Adrenal gland (tissue), 19 donors: ENCODE measurements at regions of chr12 and their contacts with region 1.

Region 1: DNA sequence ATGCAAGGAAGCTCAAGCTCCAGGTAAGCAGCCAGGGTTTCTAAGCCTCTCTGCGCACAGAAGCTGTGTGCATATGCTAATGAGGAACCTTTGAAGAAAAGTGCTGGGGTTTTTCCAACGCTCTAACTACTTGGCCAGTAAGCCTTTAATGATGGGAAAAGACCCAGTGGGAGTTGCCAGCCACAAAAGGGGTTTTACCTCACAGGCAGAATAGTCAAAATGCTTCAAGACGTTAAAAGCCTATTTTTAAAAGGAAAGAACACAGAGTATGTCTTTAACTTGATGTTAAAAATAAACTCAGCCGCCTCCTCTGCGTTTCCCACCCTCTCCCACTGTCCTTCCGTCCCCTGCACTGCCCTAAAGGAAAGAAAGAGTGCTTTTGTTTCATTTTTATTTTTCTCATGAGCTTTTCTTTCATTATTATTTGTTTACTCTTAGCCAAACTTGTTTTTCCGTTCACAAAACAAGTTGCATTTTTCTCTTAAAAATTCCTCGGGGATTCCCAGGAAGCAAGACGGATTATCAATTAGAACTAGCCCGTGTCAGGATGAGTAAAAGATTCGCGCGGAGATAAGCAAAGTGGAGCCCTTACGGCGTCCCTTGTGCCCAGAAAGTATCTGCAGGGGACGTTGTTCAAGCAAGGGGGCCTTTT is 209.8 kb upstream of the NUDT4 start:
- DNase-seq: peak in 3 of 7 donors; percentile 17 to 39 (median 36)
- H3K4me3 ChIP-seq: peak overlapping the region in 2 of 4 donors; percentile 35 to 58
- H3K27ac ChIP-seq: peak overlapping the region in 2 of 5 donors; percentile 19 to 52
- H3K4me1 ChIP-seq: peaks cover 0 to 3% of the 10 kb centered on the region in 2 donors
- H3K27me3 ChIP-seq: no peaks in the 10 kb centered on the region
- CTCF ChIP-seq: no peak
- POLR2A ChIP-seq: no peak

Region 2: DNA sequence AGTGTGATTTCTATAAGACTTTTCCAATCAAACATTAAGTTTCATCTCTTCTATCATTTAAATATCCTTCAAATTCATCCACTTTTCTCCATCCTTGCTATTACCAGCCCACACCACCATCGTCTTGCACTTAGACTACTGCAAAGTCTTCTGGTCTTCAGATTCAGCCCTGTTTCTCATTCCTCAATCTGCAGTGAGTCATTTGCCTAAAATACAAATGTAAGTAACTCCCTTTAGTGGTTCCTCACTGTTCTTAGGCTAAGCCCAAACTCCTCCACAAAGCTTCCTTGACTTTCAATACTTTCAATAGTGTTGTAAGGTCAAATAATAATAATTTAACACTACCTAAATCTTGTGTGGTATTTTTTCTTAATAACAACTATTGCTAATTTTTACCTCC is 381.9 kb before region 1 on chr12:
- intact Hi-C with region 1: no loop called
- DNase-seq: no peak
- H3K4me3 ChIP-seq: no peak overlapping the region
- H3K27ac ChIP-seq: no peak overlapping the region
- H3K4me1 ChIP-seq: peaks cover 0 to 8% of the 10 kb centered on the region in 2 donors
- H3K27me3 ChIP-seq: no peaks in the 10 kb centered on the region
- CTCF ChIP-seq: no peak
- POLR2A ChIP-seq: no peak

Region 3: GRCh38 chr12:92955997-92956663 is 211.8 kb before region 1 on chr12:
- intact Hi-C with region 1: no loop called
- DNase-seq: no peak
- H3K4me3 ChIP-seq: no peak overlapping the region
- H3K27ac ChIP-seq: no peak overlapping the region
- H3K4me1 ChIP-seq: no peaks in the 10 kb centered on the region
- H3K27me3 ChIP-seq: no peaks in the 10 kb centered on the region
- CTCF ChIP-seq: no peak
- POLR2A ChIP-seq: no peak

Region 4: GRCh38 chr12:92995258-92995903 is 172.6 kb before region 1 on chr12:
- intact Hi-C with region 1: loop called in 1 of 2 experiments (anchors 10 kb)
- DNase-seq: no peak
- H3K4me3 ChIP-seq: no peak overlapping the region
- H3K27ac ChIP-seq: no peak overlapping the region
- H3K4me1 ChIP-seq: no peaks in the 10 kb centered on the region
- H3K27me3 ChIP-seq: no peaks in the 10 kb centered on the region
- CTCF ChIP-seq: no peak
- POLR2A ChIP-seq: no peak